Caki2 (cell line): ENCODE measurements at regions of chr17 and their contacts with region 1.

Region 1: GRCh38 chr17:72602517-72603419 is 481.9 kb downstream of the SOX9 start:
- DNase-seq: peak; percentile 96

Region 2: DNA sequence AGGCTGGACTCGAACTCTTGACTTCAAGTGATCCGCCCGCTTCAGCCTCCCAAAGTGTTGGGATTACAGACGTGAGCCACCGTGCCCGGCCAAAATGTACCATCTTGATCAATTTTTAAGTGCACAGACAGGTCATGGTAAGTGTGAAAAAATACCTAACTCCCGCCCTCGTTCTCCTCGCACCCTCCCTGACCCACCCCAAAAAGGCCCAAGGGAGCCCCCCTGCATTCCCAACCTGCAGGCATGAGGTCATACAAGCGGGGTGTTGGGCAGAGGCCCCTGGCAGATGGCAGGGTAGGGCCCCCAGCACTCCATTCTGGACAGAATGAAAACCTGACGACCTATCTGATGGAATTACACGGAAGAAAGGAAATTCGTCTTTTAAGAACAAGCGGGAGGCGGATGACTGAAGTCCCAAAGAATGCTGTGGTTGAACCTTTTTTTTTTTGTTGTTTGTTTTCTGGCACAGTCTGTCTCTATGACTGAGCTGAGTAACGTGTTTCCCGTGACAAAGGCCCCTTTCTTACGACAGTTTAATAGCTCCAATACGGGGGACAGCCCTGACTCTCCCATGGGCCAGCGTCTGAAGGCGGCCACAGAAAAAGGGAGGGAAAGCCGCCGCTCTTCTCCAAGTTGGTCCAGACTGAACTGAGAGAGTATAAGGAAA is 113.3 kb after region 1 on chr17:
- in situ Hi-C with region 1: loop called (anchors 10 kb)
- DNase-seq: peak; percentile 98